Activated T-helper 1 cell treated with anti-CD3 and anti-CD28 coated beads, Interleukin-12 subunit alpha, Interleukin-12 subunit beta, Interleukin-2, Interleukin-4 antibody, amounts not matched to agents 30 ng/mL and 10 ng/mL and 1 ng/mL, durations not matched to agents 14 hours and 24 hours and 36 hours (primary cell): ENCODE measurements at regions of chr4 and their contacts with region 1.

Region 1: GRCh38 chr4:36351082-36351666 is 69.8 kb downstream of the DTHD1 start:
- DNase-seq: peak; percentile 60
- H3K4me3 Mint-ChIP-seq: no peak overlapping the region
- H3K27ac Mint-ChIP-seq: no peak overlapping the region
- H3K4me1 Mint-ChIP-seq: peaks cover 40% of the 10 kb centered on the region
- H3K27me3 Mint-ChIP-seq: peaks cover 2% of the 10 kb centered on the region

Region 2: DNA sequence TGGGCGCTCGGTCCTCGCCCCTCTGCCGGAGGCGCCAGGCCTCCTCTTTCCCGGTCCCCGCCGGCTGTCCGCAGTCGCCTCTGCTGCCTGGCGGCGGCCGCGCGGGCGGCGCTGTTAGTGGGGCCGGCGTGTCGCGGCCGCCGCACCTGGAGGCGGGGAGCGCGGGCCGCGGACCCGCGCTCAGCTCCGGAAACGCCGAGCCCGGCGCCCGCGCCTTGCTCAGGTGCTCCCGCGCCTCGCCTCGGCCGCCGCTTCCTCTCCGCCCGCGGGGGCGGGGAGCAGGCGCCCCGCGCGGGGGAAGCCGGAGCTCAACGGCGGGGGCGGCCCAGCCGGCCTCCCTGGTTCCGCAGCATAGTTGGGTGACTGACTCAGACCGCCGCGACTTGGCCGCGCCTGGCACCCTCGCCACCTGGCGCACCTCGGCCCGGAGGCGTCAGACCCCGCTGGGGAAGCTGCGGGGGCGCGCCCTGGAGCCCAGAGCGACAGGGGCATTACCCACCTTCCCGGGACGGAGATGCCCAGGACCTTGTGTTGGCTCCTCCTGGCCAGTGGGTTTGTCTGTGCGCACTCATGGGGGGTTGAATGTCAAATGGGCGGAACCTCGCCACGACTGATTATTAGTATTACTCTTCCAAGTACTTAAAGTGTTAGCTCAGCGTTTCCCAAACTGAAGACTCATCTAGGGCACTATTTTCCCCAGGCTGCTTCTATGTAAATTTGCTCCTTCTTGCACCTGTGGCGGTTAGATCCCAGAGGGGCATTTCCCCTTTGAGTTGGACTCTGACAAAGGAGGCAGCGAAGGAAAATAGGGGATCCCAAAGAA is 106.7 kb before region 1 on chr4 and contains the start of gene ARAP2:
- intact Hi-C with region 1: loop called (anchors 1 kb)
- DNase-seq: peak; percentile 68
- H3K4me3 Mint-ChIP-seq: peak within 1 kb of the TSS; percentile 94
- H3K27ac Mint-ChIP-seq: peak within 1 kb of the TSS; percentile 97
- H3K4me1 Mint-ChIP-seq: peaks cover 41% of the 10 kb centered on the region
- H3K27me3 Mint-ChIP-seq: peaks cover 9% of the 10 kb centered on the region
- total RNA-seq, gene ARAP2: 40.1 and 54.9 TPM in 2 replicates

Region 3: GRCh38 chr4:36285784-36286480 is 65.2 kb before region 1 on chr4:
- intact Hi-C with region 1: loop called (anchors 1 kb)
- DNase-seq: peak; percentile 79
- H3K4me3 Mint-ChIP-seq: peak overlapping the region; percentile 49
- H3K27ac Mint-ChIP-seq: peak overlapping the region; percentile 95
- H3K4me1 Mint-ChIP-seq: peaks cover 78% of the 10 kb centered on the region
- H3K27me3 Mint-ChIP-seq: peaks cover 2% of the 10 kb centered on the region

Region 4: DNA sequence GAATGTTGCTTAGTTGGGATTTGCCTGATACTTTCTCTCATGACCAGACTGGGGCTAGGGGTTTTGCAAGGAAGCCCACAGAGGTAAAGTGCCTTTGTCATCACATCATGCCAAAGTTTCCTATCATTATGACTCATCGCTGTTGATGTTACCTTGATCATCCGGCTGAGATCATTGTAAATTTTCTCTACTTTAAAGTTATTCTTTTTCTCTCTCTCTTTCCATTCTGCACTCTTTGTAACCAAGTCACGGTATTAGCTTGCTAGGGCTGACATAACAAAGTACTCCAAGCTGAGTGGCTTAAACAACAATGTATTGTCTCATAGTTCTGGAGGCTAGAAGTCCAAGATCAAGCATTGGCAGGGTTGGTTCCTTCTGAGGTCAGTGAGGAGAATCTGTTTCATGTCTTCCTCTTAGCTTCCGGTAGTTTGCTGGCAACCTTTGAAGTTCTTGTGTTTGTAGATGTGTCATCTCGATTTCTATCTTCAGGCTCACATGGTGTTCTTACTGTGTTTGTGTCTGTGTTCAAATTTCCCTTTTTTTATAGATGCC is 43.3 kb after region 1 on chr4:
- intact Hi-C with region 1: loop called (anchors 1 kb)
- DNase-seq: peak; percentile 56
- H3K4me3 Mint-ChIP-seq: peak overlapping the region; percentile 71
- H3K27ac Mint-ChIP-seq: peak overlapping the region; percentile 97
- H3K4me1 Mint-ChIP-seq: peaks cover 34% of the 10 kb centered on the region
- H3K27me3 Mint-ChIP-seq: peaks cover 5% of the 10 kb centered on the region

Region 5: GRCh38 chr4:36676139-36677050 is 325.2 kb after region 1 on chr4:
- intact Hi-C with region 1: no loop called
- DNase-seq: no peak
- H3K4me3 Mint-ChIP-seq: no peak overlapping the region
- H3K27ac Mint-ChIP-seq: no peak overlapping the region
- H3K4me1 Mint-ChIP-seq: no peaks in the 10 kb centered on the region
- H3K27me3 Mint-ChIP-seq: no peaks in the 10 kb centered on the region

Region 6: GRCh38 chr4:37244583-37245390 is 893.6 kb after region 1 on chr4 and contains the start of gene NWD2:
- intact Hi-C with region 1: loop called (anchors 5 kb)
- DNase-seq: no peak
- H3K4me3 Mint-ChIP-seq: no peak within 1 kb of the TSS
- H3K27ac Mint-ChIP-seq: peak within 1 kb of the TSS; percentile 23
- H3K4me1 Mint-ChIP-seq: no peaks in the 10 kb centered on the region
- H3K27me3 Mint-ChIP-seq: peaks cover 31% of the 10 kb centered on the region
- total RNA-seq, gene NWD2: not detected in 2 replicates